ENCODE measurements at regions of chr3 and their contacts with region 1.

Region 1: DNA sequence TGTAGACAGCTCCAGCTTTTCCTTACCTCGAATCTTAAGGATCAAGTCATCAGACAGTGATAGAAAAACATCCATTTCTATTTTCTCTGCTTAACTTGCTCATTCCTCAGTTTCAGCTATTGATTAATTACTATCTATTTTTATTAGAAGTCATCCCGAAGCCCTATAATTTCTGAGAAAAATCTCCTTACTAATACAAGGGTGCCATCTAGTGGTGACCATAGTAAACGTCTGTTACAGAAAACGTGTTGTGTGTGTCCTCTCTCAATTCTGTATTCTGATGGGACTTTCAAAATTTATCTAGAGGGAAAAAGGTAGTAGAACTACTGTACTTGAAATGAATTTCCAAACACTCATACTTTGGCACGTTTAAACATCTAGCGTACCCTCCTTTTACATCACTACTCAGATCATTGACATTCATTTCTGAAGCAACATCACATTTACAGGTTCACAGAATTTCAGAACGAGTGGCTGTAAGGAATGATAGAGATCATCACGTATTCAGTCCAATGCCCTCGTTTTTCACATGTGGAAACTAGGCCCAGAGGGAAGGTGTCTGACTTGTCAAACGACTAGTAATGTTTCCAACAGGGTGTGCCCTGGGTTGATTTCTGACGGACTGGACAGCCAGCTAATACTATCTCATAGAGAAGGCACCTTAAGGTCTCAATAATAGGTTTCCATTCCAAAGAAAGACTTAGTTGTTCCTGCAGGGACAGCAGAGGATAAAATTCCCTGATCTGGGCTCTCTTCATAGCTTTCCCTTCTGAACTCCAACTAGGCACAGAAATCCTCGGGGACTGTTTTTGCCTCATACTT is 25.6 kb downstream of the HACD2 start:
- DNase-seq: no peak
- ATAC-seq: no peak
- H3K4me3 Mint-ChIP-seq: no peak overlapping the region
- H3K27ac Mint-ChIP-seq: no peak overlapping the region
- H3K4me1 Mint-ChIP-seq: peaks cover 8% of the 10 kb centered on the region
- H3K27me3 Mint-ChIP-seq: no peaks in the 10 kb centered on the region
- CTCF ChIP-seq: peak; percentile 90

Region 2: GRCh38 chr3:122754929-122755328 is 804.3 kb before region 1 on chr3:
- CTCF ChIA-PET with region 1: no interaction called
- POLR2A ChIA-PET with region 1: no interaction called
- intact Hi-C with region 1: loop called (anchors 2 kb)
- DNase-seq: no peak
- ATAC-seq: peak; percentile 79
- H3K4me3 Mint-ChIP-seq: no peak overlapping the region
- H3K27ac Mint-ChIP-seq: no peak overlapping the region
- H3K4me1 Mint-ChIP-seq: no peaks in the 10 kb centered on the region
- H3K27me3 Mint-ChIP-seq: no peaks in the 10 kb centered on the region
- CTCF ChIP-seq: peak; percentile 54

Region 3: DNA sequence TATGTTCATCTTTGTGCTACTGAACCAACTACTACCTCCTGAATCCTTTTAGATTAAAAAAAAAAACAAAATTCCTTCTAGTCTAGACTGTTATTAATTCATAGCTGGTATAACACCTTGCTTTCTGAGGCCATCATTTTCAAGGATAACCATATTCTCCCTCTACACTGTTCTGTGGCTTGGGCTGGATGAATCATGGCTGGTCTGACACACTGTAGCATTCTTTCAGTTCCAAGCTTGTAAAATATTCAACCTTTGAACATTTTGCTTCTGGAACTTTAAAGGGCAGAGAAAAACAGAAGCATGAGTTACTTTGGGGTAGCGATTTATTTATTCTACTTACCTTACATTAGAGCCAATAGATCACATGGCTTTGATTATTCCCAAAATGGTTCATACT is 773.2 kb before region 1 on chr3:
- CTCF ChIA-PET with region 1: no interaction called
- POLR2A ChIA-PET with region 1: no interaction called
- intact Hi-C with region 1: no loop called
- DNase-seq: no peak
- ATAC-seq: no peak
- H3K4me3 Mint-ChIP-seq: no peak overlapping the region
- H3K27ac Mint-ChIP-seq: no peak overlapping the region
- H3K4me1 Mint-ChIP-seq: peaks cover 11% of the 10 kb centered on the region
- H3K27me3 Mint-ChIP-seq: no peaks in the 10 kb centered on the region
- CTCF ChIP-seq: no peak

Region 4: DNA sequence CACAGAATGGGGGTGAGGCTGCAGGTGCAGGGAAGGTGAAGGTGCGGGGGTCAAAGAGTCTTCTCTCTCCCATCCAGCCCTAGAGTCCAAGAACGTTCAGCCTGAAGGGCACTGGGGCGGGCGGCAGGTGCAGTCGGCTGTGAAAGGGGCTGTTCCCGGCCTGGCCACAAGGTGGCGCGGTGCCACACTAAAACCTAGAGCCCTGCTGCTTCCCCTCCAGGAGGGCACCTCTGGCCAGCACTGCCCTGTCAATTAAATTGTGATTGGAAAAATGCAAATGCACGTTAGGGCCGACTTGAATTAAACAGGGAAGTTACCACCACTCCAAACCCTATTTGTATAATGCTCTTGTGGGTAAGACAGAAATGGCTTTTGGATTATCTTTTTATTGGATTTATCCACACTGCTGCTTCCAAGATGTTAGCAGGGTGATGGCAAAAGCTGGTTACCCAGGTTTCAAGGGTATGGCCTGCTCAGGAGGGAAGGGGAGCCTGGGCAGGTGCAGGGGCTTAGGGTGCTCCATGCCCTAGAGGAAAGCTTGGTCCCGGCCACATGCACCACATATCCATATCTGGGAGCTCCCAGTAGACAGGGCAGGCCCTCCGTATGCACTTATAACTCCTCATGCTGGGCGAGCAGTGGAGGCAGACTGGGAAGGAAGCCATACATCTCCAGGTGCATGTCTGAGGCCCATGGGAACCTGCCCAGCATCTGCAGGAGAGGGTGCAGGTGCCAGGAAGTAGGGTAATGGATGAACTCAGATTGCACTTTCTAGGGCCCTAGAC is 230.2 kb before region 1 on chr3:
- CTCF ChIA-PET with region 1: interaction called, 13 read pairs
- POLR2A ChIA-PET with region 1: no interaction called
- intact Hi-C with region 1: loop called (anchors 1 kb)
- DNase-seq: peak; percentile 69
- ATAC-seq: peak; percentile 79
- H3K4me3 Mint-ChIP-seq: no peak overlapping the region
- H3K27ac Mint-ChIP-seq: no peak overlapping the region
- H3K4me1 Mint-ChIP-seq: no peaks in the 10 kb centered on the region
- H3K27me3 Mint-ChIP-seq: peaks cover 2% of the 10 kb centered on the region
- CTCF ChIP-seq: no peak

Region 5: GRCh38 chr3:123449102-123449996 is 109.9 kb before region 1 on chr3:
- CTCF ChIA-PET with region 1: no interaction called
- POLR2A ChIA-PET with region 1: no interaction called
- intact Hi-C with region 1: loop called (anchors 5 kb)
- DNase-seq: peak; percentile 21
- ATAC-seq: no peak
- H3K4me3 Mint-ChIP-seq: peak overlapping the region; percentile 44
- H3K27ac Mint-ChIP-seq: no peak overlapping the region
- H3K4me1 Mint-ChIP-seq: peaks cover 7% of the 10 kb centered on the region
- H3K27me3 Mint-ChIP-seq: peaks cover 44% of the 10 kb centered on the region
- CTCF ChIP-seq: no peak

Region 6: GRCh38 chr3:123576122-123576521 is 16.9 kb after region 1 on chr3:
- CTCF ChIA-PET with region 1: interaction called, 13 read pairs
- POLR2A ChIA-PET with region 1: interaction called, 3 read pairs
- intact Hi-C with region 1: no loop called
- DNase-seq: no peak
- ATAC-seq: peak; percentile 96
- H3K4me3 Mint-ChIP-seq: peak overlapping the region; percentile 44
- H3K27ac Mint-ChIP-seq: peak overlapping the region; percentile 73
- H3K4me1 Mint-ChIP-seq: peaks cover 53% of the 10 kb centered on the region
- H3K27me3 Mint-ChIP-seq: no peaks in the 10 kb centered on the region
- CTCF ChIP-seq: no peak

Region 7: GRCh38 chr3:124032648-124033359 is 473.6 kb after region 1 on chr3:
- CTCF ChIA-PET with region 1: no interaction called
- POLR2A ChIA-PET with region 1: no interaction called
- intact Hi-C with region 1: no loop called
- DNase-seq: peak; percentile 55
- ATAC-seq: peak; percentile 89
- H3K4me3 Mint-ChIP-seq: peak overlapping the region; percentile 76
- H3K27ac Mint-ChIP-seq: no peak overlapping the region
- H3K4me1 Mint-ChIP-seq: peaks cover 19% of the 10 kb centered on the region
- H3K27me3 Mint-ChIP-seq: peaks cover 43% of the 10 kb centered on the region
- CTCF ChIP-seq: no peak